Activated B cell treated with CpG ODN at 0.5 μM for 24 hours (primary cell): ENCODE measurements at regions of chr3 and their contacts with region 1.

Region 1: GRCh38 chr3:87236093-87236492 is 9.0 kb downstream of the CHMP2B start:
- DNase-seq: no peak
- ATAC-seq: no peak
- H3K4me3 Mint-ChIP-seq: no peak overlapping the region
- H3K27ac Mint-ChIP-seq: no peak overlapping the region
- H3K4me1 Mint-ChIP-seq: peaks cover 29% of the 10 kb centered on the region
- H3K27me3 Mint-ChIP-seq: no peaks in the 10 kb centered on the region
- CTCF ChIP-seq: no peak

Region 2: DNA sequence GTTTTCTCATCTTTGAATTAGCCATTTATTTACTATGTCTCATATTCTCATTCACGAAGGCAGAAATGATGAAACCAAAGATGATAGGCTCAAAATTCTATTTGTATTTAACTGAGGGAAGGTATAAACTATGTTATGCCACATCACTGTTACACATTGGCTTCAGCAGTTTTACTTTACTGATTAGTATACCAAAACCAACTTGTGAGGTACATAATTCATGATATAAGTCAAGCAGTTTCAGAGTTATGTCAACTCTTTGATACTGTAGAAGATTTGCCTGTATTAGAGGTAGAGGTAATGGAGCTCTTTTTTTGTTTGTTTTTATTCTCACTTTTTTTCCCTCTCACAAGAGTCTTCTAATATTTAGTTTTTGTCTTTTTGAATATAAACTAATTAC is 13.9 kb after region 1 on chr3:
- CTCF ChIA-PET with region 1: no interaction called
- POLR2A ChIA-PET with region 1: no interaction called
- intact Hi-C with region 1: loop called (anchors 2 kb)
- DNase-seq: no peak
- ATAC-seq: no peak
- H3K4me3 Mint-ChIP-seq: no peak overlapping the region
- H3K27ac Mint-ChIP-seq: no peak overlapping the region
- H3K4me1 Mint-ChIP-seq: peaks cover 4% of the 10 kb centered on the region
- H3K27me3 Mint-ChIP-seq: no peaks in the 10 kb centered on the region
- CTCF ChIP-seq: no peak